Left cardiac atrium (tissue), 4 donors: ENCODE measurements at regions of chr5 and their contacts with region 1.

Region 1: DNA sequence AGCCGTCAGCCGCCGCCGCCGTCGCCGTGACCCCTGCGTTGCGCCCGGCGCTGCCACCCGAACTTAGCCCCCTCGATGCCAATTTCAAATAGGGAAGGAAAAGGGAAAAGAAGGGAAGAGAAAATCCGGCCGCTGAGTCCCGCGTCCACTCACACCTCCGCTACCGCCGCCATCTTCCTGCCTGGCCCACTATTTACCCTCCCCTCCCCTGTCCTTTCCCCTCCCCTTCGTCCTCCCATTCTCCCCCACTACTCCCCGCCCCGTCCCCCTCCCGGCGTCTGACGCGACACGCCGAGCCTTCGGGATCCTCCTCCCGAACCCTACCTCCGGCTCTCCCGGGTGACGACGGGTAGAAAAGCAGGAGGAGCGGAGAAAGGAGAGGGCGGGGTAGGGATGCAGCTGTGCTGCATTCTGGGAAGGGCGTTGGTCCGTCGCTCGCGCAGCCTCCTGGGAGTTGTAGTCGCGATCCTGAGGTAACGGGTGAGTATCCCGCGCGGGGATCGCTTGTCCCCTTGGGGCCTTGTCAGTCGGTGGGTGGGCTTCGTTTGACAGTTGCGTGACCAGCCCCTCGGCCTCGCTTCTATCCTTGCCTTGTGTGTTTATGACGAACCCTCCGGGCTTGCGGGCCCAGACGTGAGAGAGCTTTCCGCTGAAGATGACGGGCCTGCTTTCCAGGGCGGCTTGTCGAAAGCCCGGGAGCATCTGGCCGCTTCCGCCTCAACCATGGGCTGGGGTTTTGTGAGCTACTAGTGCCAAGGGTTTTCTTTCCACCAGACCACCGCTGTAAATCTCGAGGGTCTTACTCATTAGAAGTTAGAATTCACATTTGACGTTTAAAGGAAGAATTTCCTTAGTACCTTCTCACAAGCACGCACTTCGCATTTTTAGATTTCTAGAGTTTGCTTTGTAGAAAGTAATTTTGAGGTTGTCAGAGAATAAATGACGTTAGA is at the starts of genes CERT1 and POLK:
- DNase-seq: peak; percentile 99
- ATAC-seq: peak; percentile 97 to 99
- total RNA-seq, gene CERT1: 21.6 to 32.9 TPM
- total RNA-seq, gene POLK: 20.6 to 23.1 TPM

Region 2: DNA sequence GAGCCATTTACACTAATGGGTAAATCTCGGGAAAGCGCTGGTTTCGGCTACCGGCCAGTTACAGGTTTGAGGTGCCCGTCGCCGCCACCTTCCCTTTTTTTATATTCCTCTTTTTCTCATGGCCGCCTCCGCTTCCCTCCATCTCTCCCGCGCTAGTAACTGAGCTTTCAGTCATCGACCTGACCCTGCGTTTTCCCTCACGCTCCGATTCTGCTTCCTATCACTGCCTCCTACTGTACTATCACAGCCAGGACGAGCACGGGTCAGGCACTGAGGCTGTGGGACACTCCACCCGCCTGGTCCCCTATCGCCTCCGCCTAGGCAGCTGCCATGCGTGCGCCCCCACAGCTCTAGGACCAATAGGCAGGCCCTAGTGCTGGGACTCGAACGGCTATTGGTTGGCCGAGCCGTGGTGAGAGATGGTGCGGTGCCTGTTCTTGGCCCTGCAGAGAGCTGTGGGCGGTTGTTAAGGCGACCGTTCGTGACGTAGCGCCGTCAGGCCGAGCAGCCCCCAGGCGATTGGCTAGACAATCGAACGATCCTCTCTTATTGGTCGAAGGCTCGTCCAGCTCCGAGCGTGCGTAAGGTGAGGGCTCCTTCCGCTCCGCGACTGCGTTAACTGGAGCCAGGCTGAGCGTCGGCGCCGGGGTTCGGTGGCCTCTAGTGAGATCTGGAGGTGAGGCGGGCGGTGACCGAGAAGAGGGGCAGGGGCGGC is 174.9 kb before region 1 on chr5 and contains the start of gene HMGCR:
- intact Hi-C with region 1: loop called in 1 of 2 experiments (anchors 5 kb)
- DNase-seq: peak; percentile 99
- ATAC-seq: peak; percentile 98 to 99
- total RNA-seq, gene HMGCR: 10.8 to 19.6 TPM

Region 3: GRCh38 chr5:75566710-75567309 is 55.1 kb after region 1 on chr5:
- intact Hi-C with region 1: loop called in 1 of 2 experiments (anchors 5 kb)
- DNase-seq: no peak
- ATAC-seq: peak; percentile 95 to 99

Region 4: DNA sequence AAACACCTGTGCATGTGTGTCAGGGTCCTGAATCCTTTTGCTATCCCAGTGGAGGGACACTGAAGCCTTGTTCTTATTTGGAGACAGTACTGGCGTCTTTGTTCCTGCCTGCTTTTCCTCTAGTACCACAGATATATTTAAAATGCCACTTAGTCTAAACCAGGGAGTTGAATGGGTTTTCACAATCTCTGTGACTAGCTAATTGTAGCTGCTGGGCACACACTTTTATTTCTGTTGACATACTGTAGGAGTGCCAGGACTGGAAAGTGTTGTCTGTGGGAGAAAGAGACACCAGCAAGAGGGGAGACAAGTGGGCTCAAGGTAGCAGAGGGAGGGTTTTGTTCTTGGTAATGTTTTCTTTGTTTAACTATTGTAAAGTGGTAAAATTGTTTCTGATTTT is 397.5 kb after region 1 on chr5:
- intact Hi-C with region 1: no loop called
- DNase-seq: no peak
- ATAC-seq: no peak

Region 5: DNA sequence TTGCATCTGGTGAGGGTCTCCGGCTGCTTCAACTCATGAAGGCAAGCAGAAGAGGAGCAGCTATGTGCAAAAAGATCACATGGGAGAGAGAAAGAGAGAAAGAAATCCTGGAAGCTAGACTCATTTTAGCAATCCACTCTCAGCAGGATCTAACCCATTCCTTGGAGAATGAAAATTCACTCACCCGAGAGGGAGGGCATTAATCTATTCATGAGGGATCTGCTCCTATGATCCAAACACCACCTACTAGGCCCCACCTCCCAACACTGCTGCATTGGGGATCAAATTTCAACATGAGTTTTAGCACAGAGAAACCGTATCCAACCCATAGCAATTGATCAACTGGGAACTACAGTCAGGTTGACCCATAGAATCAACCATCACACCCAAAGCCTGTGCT is 473.4 kb after region 1 on chr5:
- intact Hi-C with region 1: no loop called
- DNase-seq: no peak
- ATAC-seq: no peak